CD4-positive, alpha-beta T cell (primary cell): ENCODE measurements at regions of chr3 and their contacts with region 1.

Region 1: DNA sequence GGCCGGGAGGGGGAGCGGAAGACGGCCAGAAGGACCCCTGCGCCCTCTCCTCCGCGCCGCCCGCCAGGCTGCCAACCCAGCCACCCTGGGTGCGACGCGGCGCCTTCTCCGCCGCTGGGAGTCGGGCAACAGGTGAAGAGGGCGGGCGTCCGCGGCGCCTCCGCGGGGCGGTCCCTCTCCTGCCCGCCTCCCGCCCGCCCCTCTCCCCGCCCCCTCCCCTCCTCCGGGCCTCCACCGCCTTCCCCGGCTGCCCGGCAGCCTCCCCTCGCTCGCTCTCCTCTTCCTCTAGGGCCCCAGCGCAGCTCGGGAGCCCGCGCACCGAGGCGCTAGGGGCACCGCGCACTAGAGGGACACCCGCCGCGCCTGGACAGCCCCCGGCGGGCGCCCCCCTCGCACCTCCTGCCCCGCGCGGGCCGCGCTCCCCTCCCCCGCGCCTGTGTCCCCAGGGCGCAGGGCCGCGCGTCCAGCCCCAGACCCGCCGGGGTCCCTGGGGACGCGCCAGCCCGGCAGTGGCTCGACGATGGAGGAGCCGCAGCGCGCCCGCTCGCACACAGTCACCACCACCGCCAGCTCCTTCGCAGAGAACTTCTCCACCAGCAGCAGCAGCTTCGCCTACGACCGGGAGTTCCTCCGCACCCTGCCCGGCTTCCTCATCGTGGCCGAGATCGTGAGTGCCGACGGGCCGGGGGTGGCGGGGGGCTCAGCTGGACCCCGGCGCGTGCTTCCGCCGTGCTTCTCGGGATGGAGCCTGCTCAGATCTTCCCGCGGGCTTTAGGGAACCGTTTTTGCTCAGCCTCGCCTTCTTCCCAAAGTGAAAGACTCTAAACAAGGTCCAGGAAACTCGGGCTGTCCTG is at the start of gene CMTM8:
- DNase-seq: peak; percentile 44 to 89 (median 72)
- ATAC-seq: peak; percentile 82
- H3K4me3 ChIP-seq: peak within 1 kb of the TSS; percentile 80
- H3K4me3 Mint-ChIP-seq: peak within 1 kb of the TSS; percentile 93
- H3K27ac ChIP-seq: no peak within 1 kb of the TSS
- H3K27ac Mint-ChIP-seq: peak within 1 kb of the TSS; percentile 79
- H3K4me1 ChIP-seq: peaks cover 31% of the 10 kb centered on the region
- H3K4me1 Mint-ChIP-seq: peaks cover 51% of the 10 kb centered on the region
- H3K27me3 ChIP-seq: no peaks in the 10 kb centered on the region
- H3K27me3 Mint-ChIP-seq: no peaks in the 10 kb centered on the region
- CTCF ChIP-seq: no peak
- total RNA-seq, gene CMTM8: 6.1 to 7.5 TPM

Region 2: DNA sequence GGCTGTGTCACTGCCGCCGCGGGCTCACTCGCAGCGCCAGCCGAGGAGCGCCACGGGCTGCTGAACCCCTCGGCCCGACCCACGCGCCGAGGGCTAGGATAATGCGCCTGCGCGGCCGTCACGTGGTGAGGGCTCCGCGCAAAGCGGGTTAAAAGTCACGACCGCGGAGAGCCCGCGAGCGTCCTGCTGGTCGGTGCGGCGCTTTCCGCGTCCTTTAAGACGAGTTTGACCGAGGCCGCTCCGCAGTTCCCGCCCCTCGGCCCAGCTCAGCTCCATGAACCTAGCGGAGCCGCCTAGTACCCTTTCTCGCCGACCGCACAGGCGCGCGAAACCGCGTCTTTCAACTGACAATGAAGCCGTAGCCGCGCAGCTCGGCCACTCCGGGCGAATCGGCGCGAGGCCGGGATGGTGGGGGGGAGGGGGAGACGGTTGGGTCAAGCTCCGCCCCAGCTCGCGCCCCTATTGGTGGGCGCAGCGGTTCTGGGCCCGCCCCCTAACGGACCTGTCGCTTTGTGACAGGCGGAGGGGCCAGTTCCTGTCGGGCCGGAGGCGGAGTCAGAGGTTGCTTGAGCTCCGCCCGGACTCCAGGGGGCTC is 706.6 kb before region 1 on chr3:
- CTCF ChIA-PET with region 1: no interaction called
- POLR2A ChIA-PET with region 1: no interaction called
- intact Hi-C with region 1: no loop called
- DNase-seq: peak; percentile 97 to 99 (median 98)
- ATAC-seq: peak; percentile 83
- H3K4me3 ChIP-seq: peak overlapping the region; percentile 91
- H3K4me3 Mint-ChIP-seq: peak overlapping the region; percentile 97
- H3K27ac ChIP-seq: peak overlapping the region; percentile 97 to 98
- H3K27ac Mint-ChIP-seq: peak overlapping the region; percentile 96
- H3K4me1 ChIP-seq: peaks cover 14% of the 10 kb centered on the region
- H3K4me1 Mint-ChIP-seq: peaks cover 27% of the 10 kb centered on the region
- H3K27me3 ChIP-seq: no peaks in the 10 kb centered on the region
- H3K27me3 Mint-ChIP-seq: no peaks in the 10 kb centered on the region
- CTCF ChIP-seq: no peak

Region 3: GRCh38 chr3:32117324-32117723 is 121.4 kb before region 1 on chr3:
- CTCF ChIA-PET with region 1: no interaction called
- POLR2A ChIA-PET with region 1: no interaction called
- intact Hi-C with region 1: loop called in 1 of 2 experiments (anchors 5 kb)
- DNase-seq: no peak
- ATAC-seq: no peak
- H3K4me3 ChIP-seq: no peak overlapping the region
- H3K4me3 Mint-ChIP-seq: no peak overlapping the region
- H3K27ac ChIP-seq: no peak overlapping the region
- H3K27ac Mint-ChIP-seq: no peak overlapping the region
- H3K4me1 ChIP-seq: peaks cover 19% of the 10 kb centered on the region
- H3K4me1 Mint-ChIP-seq: peaks cover 74% of the 10 kb centered on the region
- H3K27me3 ChIP-seq: no peaks in the 10 kb centered on the region
- H3K27me3 Mint-ChIP-seq: no peaks in the 10 kb centered on the region
- CTCF ChIP-seq: no peak

Region 4: DNA sequence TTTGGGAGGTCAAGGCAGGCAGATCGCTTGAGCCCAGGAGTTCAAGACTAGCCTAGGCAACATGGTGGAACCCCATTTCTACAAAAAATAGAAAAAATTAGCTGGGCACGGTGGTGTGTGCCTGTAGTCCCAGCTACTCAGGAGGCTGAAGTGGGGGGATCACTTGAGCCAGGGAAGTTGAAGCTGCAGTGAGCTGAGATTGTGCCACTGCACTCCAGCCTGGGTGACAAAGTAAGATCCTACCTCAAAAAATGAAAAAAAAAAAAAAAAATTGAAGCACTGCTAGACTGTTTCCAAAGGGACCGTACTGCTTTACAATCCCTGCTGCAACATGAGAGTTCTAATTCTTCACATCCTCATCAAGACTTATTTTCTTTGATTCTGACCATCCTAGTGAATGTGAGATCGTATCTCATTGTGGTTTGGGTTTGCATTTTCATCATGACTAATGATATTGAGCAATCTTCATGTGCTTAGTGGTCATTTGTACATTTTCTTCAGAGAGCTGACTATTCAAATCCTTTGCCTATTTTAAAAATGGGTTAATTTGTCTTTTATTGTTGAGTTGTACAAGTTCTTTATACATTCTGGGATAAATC is 10.6 kb after region 1 on chr3:
- CTCF ChIA-PET with region 1: interaction called, 11 read pairs
- POLR2A ChIA-PET with region 1: interaction called, 6 read pairs
- intact Hi-C with region 1: no loop called
- DNase-seq: peak in 1 of 14 experiments; percentile 27
- ATAC-seq: no peak
- H3K4me3 ChIP-seq: no peak overlapping the region
- H3K4me3 Mint-ChIP-seq: no peak overlapping the region
- H3K27ac ChIP-seq: no peak overlapping the region
- H3K27ac Mint-ChIP-seq: no peak overlapping the region
- H3K4me1 ChIP-seq: peaks cover 8% of the 10 kb centered on the region
- H3K4me1 Mint-ChIP-seq: peaks cover 41% of the 10 kb centered on the region
- H3K27me3 ChIP-seq: no peaks in the 10 kb centered on the region
- H3K27me3 Mint-ChIP-seq: no peaks in the 10 kb centered on the region
- CTCF ChIP-seq: no peak

Region 5: GRCh38 chr3:32288819-32289218 is 50.1 kb after region 1 on chr3:
- CTCF ChIA-PET with region 1: interaction called, 8 read pairs
- POLR2A ChIA-PET with region 1: interaction called, 24 read pairs
- intact Hi-C with region 1: loop called (anchors 5 kb)
- DNase-seq: peak in 6 of 14 experiments; percentile 12 to 73 (median 48)
- ATAC-seq: peak; percentile 83
- H3K4me3 ChIP-seq: no peak overlapping the region
- H3K4me3 Mint-ChIP-seq: peak overlapping the region; percentile 3
- H3K27ac ChIP-seq: no peak overlapping the region
- H3K27ac Mint-ChIP-seq: peak overlapping the region; percentile 79
- H3K4me1 ChIP-seq: peaks cover 37% of the 10 kb centered on the region
- H3K4me1 Mint-ChIP-seq: peaks cover 50% of the 10 kb centered on the region
- H3K27me3 ChIP-seq: no peaks in the 10 kb centered on the region
- H3K27me3 Mint-ChIP-seq: no peaks in the 10 kb centered on the region
- CTCF ChIP-seq: peak; percentile 19

Region 6: DNA sequence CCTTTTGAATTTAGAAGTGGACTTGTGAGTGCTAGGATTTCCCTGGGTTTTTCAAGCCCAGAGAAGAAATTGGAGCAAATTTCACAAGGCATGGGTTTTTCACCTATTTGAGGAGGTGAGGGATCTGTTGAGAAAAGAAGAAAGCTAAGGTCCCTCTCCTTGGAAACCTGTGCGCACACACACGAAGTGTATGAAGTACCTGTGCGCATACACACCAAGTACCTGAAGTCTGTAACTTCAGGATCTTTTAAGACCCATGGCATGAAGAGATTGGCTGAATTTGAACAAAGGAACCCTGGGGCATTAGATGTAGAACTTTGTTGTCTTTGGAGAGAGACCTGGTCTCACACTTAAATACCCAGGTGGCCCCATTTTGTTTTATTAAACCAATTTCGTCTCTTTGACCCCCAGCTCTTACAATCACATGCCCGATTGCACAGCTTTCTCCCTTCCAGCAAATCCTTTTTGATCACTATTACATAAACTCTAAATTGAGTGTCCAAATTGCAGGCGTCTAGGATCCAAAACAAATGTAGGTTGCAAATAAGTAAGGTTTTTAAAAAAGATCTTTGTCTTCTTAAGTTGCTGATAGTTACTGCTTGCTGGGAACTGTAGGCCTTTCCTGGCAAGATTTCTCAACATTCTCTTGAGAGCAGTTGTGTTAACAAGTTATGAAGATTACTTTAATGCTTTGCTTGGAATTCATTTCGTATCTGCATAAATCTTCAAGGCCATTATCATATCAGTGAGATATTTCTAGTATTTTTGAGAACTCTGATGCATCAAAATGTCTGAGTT is 64.1 kb after region 1 on chr3:
- CTCF ChIA-PET with region 1: interaction called, 10 read pairs
- POLR2A ChIA-PET with region 1: interaction called, 12 read pairs
- intact Hi-C with region 1: no loop called
- DNase-seq: peak in 2 of 14 experiments; percentile 16 to 18
- ATAC-seq: peak; percentile 27
- H3K4me3 ChIP-seq: no peak overlapping the region
- H3K4me3 Mint-ChIP-seq: peak overlapping the region; percentile 68
- H3K27ac ChIP-seq: peak overlapping the region; percentile 71 to 80
- H3K27ac Mint-ChIP-seq: peak overlapping the region; percentile 97
- H3K4me1 ChIP-seq: peaks cover 42% of the 10 kb centered on the region
- H3K4me1 Mint-ChIP-seq: peaks cover 74% of the 10 kb centered on the region
- H3K27me3 ChIP-seq: no peaks in the 10 kb centered on the region
- H3K27me3 Mint-ChIP-seq: no peaks in the 10 kb centered on the region
- CTCF ChIP-seq: no peak

Region 7: DNA sequence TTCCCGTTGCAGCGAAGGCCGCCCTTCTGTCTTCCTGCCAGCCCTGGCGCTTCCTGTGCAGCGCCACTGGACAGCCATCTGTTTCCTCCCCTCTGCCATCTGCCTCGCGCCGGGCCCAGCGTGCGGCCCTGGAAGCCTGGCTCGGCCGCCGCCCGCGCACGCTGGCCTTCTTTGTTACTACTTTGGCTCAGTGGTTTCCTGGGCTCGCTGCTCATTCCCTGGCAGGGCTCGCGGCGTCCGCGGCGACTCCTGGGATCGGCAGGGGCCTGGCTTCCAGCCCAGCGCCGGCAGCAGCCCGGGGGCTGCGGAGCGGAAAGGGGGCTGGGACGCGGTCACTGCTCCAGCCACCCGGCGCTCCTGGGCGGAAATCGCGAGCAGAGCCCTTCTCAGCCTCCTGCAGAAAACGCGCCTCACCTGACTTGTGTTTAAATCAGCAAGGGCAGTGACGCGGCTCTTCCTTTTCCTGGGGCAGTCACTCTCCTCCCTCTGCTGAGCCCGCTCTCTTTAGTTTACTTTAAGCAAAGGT is 162.9 kb after region 1 on chr3:
- CTCF ChIA-PET with region 1: no interaction called
- POLR2A ChIA-PET with region 1: interaction called, 3 read pairs
- intact Hi-C with region 1: loop called in 1 of 2 experiments (anchors 2 kb)
- DNase-seq: peak; percentile 37 to 84 (median 58)
- ATAC-seq: peak; percentile 73
- H3K4me3 ChIP-seq: peak overlapping the region; percentile 65
- H3K4me3 Mint-ChIP-seq: peak overlapping the region; percentile 92
- H3K27ac ChIP-seq: peak overlapping the region; percentile 85 to 92
- H3K27ac Mint-ChIP-seq: peak overlapping the region; percentile 90
- H3K4me1 ChIP-seq: peaks cover 62% of the 10 kb centered on the region
- H3K4me1 Mint-ChIP-seq: peaks cover 77% of the 10 kb centered on the region
- H3K27me3 ChIP-seq: no peaks in the 10 kb centered on the region
- H3K27me3 Mint-ChIP-seq: no peaks in the 10 kb centered on the region
- CTCF ChIP-seq: no peak

Region 8: GRCh38 chr3:32570421-32571191 is 331.9 kb after region 1 on chr3 and contains the start of gene DYNC1LI1:
- CTCF ChIA-PET with region 1: no interaction called
- POLR2A ChIA-PET with region 1: no interaction called
- intact Hi-C with region 1: loop called in 1 of 2 experiments (anchors 5 kb)
- DNase-seq: peak; percentile 85 to 97 (median 92)
- ATAC-seq: peak; percentile 95
- H3K4me3 ChIP-seq: peak within 1 kb of the TSS; percentile 76
- H3K4me3 Mint-ChIP-seq: peak within 1 kb of the TSS; percentile 94
- H3K27ac ChIP-seq: peak within 1 kb of the TSS; percentile 72
- H3K27ac Mint-ChIP-seq: peak within 1 kb of the TSS; percentile 74
- H3K4me1 ChIP-seq: peaks cover 20% of the 10 kb centered on the region
- H3K4me1 Mint-ChIP-seq: peaks cover 40% of the 10 kb centered on the region
- H3K27me3 ChIP-seq: no peaks in the 10 kb centered on the region
- H3K27me3 Mint-ChIP-seq: no peaks in the 10 kb centered on the region
- CTCF ChIP-seq: no peak
- total RNA-seq, gene DYNC1LI1: 28.1 to 28.3 TPM